ENCODE measurements at regions of chr5 and their contacts with region 1.

Region 1: GRCh38 chr5:57887851-57888621 is 405.4 kb upstream of the ACTBL2 start:
- DNase-seq: peak; percentile 58 to 64
- H3K4me3 ChIP-seq: no peak overlapping the region
- H3K27ac ChIP-seq: peak overlapping the region; percentile 48
- H3K4me1 ChIP-seq: peaks cover 18% of the 10 kb centered on the region
- H3K27me3 ChIP-seq: no peaks in the 10 kb centered on the region
- CTCF ChIP-seq: peak; percentile 58

Region 2: DNA sequence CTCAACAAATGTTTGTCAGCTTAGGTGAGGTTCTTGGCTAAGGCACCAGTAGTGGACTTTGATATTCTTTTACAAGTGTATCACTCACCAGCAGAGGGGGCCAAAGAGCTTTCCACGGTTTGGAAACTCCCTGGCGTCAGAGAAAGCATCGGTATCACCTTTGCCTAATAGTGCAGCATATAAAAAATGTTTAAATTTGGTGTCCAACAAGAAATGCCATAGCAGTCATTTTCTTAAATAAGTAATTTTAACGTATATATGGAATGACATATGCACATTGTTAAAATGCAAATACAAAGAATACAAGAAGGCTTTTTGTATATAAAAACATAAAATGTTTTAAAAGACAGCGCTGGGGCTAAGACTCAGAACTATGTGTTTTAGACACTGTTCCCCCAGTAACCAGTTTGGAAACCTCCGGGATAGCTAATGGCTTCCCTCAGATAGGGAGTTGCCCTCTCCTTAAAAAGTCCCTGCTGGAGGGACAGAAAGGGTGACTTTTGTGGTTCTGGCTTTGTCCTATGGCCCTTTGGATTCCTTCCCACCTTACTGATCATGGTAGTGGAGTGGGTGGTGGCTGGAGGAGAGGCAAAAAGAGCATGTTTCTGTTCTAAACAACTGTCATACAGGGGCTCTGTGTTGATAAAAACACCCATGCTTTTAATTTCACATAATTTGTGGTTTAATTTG is 589.6 kb before region 1 on chr5:
- CTCF ChIA-PET with region 1: interaction called, 5 read pairs
- POLR2A ChIA-PET with region 1: no interaction called
- intact Hi-C with region 1: loop called (anchors 1 kb)
- DNase-seq: peak; percentile 74 to 80
- H3K4me3 ChIP-seq: no peak overlapping the region
- H3K27ac ChIP-seq: peak overlapping the region; percentile 48
- H3K4me1 ChIP-seq: peaks cover 11% of the 10 kb centered on the region; the same call in 1 of the 2 replicates
- H3K27me3 ChIP-seq: no peaks in the 10 kb centered on the region
- CTCF ChIP-seq: peak; percentile 86

Region 3: DNA sequence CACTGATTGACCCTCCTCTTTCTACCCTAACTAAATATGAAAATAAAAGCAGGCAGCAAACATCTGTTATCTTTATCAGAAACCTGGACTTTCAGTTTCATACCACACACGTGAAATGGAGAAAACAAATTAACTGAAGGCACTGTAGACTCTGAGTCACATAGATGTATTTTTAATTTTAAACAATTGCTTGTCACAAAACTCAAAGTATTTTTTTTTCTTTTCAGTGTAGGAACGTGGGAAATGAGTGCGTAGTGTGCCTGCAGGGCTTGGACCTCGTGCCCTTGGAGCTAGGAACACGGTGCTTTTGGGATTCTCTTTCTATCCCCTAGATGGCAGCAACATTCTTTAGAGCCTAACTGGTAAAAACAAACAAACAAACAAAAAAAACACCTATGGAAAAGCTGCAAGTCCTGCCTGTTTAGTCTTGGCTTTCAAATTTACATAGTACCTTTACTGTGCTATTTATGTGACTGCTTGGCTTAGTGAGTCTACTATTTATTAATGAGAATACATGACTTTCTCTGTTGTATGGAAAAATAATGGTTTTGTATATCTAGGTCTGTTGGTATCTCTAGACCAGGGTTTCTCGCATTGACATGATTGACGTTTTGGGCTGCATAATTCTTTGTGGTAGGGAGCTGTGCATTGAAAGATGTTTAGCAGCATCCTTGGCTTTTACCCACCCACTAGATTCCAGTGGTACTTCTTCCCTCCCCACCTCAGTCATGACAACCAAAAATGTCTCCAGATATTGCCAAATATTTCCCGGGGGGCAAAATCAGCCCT is 388.6 kb before region 1 on chr5:
- CTCF ChIA-PET with region 1: no interaction called
- POLR2A ChIA-PET with region 1: no interaction called
- intact Hi-C with region 1: loop called (anchors 1 kb)
- DNase-seq: peak; percentile 50 to 84
- H3K4me3 ChIP-seq: peak overlapping the region; percentile 18; the same call in 1 of the 2 replicates
- H3K27ac ChIP-seq: peak overlapping the region; percentile 74
- H3K4me1 ChIP-seq: peaks cover 34% of the 10 kb centered on the region
- H3K27me3 ChIP-seq: no peaks in the 10 kb centered on the region
- CTCF ChIP-seq: peak; percentile 84

Region 4: DNA sequence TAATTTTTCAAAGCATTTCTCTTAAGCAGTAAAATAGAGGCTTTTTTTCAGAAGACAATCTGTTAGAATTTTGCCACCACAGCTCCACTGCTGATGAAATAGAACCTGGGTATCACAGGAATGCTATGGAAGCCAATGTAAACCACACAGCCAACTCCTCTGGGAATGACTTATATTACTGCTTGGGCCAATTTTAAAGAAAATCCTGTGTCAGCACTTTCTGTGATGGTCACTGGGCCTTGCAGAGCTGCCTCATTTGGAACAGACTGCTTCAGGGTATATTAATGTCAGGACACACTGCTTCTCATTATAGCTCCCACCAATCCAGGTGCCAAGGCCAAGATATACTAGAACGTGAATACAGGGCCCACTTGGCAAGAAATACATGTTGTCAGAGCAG is 261.3 kb before region 1 on chr5:
- CTCF ChIA-PET with region 1: no interaction called
- POLR2A ChIA-PET with region 1: no interaction called
- intact Hi-C with region 1: no loop called
- DNase-seq: no peak
- H3K4me3 ChIP-seq: no peak overlapping the region
- H3K27ac ChIP-seq: no peak overlapping the region
- H3K4me1 ChIP-seq: no peaks in the 10 kb centered on the region
- H3K27me3 ChIP-seq: no peaks in the 10 kb centered on the region
- CTCF ChIP-seq: no peak

Region 5: DNA sequence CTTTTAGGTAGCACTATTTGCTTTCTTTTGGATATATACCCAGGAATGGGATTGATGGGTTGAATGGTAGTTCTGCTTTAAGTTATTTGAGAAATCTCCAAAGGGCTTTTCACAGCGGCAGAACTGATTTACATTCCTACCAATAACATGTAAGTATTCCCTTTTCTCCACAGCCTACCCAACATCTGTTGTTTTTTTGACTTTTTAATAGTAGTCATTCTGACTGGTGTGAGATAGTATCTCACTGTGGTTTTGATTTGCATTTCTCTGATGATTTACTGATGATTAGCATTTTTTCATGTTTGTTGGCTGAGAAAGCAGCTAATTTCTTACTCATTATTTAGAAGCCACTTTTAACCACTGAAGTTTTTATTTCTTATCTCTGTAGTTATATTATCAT is 184.3 kb before region 1 on chr5:
- CTCF ChIA-PET with region 1: no interaction called
- POLR2A ChIA-PET with region 1: no interaction called
- intact Hi-C with region 1: no loop called
- DNase-seq: no peak
- H3K4me3 ChIP-seq: no peak overlapping the region
- H3K27ac ChIP-seq: no peak overlapping the region
- H3K4me1 ChIP-seq: peaks cover 6% of the 10 kb centered on the region
- H3K27me3 ChIP-seq: no peaks in the 10 kb centered on the region
- CTCF ChIP-seq: no peak

Region 6: DNA sequence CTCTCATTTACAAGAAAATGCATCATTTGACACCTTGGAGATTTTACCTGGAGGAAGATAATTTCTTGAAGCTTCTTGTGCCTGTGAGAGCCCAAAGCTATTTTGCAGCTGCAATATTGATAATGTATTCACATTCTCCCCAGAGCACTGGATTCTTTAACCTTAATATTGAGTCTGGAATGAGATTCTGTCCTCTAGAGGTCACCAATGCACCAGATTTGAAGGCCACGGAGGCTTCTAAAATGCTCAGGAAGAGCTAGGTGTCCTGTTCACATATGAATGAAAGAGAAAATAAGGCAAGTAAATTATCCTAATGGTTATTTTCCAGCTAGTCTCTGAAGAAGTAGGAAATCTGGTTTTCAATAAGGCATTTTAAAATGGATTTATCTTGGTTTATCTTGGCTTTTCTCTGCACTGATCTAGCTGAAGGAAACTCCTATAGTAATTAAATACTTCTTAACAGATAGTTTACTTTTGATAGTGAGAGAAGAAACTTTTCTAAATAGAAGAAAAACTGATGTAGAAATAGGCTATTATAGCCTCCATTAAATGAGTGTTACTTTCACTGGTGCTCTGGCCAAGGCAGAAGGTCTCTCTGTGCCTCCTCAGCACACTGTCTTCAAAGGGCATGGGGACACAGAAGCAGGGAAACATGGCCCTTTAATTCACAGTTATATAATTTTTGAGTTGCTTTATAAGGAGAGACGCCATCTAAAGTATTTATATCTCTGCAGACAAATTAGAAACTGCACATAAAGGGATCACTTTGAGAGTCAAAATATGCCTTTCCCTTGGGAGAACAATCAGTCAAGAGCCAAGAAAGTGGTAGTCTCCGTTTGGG is 108.4 kb before region 1 on chr5:
- CTCF ChIA-PET with region 1: interaction called, 5 read pairs
- POLR2A ChIA-PET with region 1: interaction called, 13 read pairs
- intact Hi-C with region 1: loop called (anchors 1 kb)
- DNase-seq: peak; percentile 59 to 73
- H3K4me3 ChIP-seq: no peak overlapping the region
- H3K27ac ChIP-seq: peak overlapping the region; percentile 55
- H3K4me1 ChIP-seq: peaks cover 29% of the 10 kb centered on the region
- H3K27me3 ChIP-seq: no peaks in the 10 kb centered on the region
- CTCF ChIP-seq: peak; percentile 77

Region 7: GRCh38 chr5:57841676-57842363 is 46.2 kb before region 1 on chr5:
- CTCF ChIA-PET with region 1: no interaction called
- POLR2A ChIA-PET with region 1: interaction called, 3 read pairs
- intact Hi-C with region 1: loop called (anchors 1 kb)
- DNase-seq: peak; percentile 79 to 98
- H3K4me3 ChIP-seq: peak overlapping the region; percentile 24; the same call in 1 of the 2 replicates
- H3K27ac ChIP-seq: peak overlapping the region; percentile 98
- H3K4me1 ChIP-seq: peaks cover 66% of the 10 kb centered on the region
- H3K27me3 ChIP-seq: no peaks in the 10 kb centered on the region
- CTCF ChIP-seq: 0 out of 2 replicates have a peak, but pooled peaks have one; percentile 16

Region 8: GRCh38 chr5:58235299-58235698 is 347.3 kb after region 1 on chr5:
- CTCF ChIA-PET with region 1: no interaction called
- POLR2A ChIA-PET with region 1: no interaction called
- intact Hi-C with region 1: loop called (anchors 5 kb)
- DNase-seq: peak; percentile 27 to 90
- H3K4me3 ChIP-seq: no peak overlapping the region
- H3K27ac ChIP-seq: peak overlapping the region; percentile 52
- H3K4me1 ChIP-seq: peaks cover 43% of the 10 kb centered on the region
- H3K27me3 ChIP-seq: no peaks in the 10 kb centered on the region
- CTCF ChIP-seq: no peak

Measured in PC-9 (cell line).